Caco-2 (cell line): ENCODE measurements at regions of chr15 and their contacts with region 1.

Region 1: DNA sequence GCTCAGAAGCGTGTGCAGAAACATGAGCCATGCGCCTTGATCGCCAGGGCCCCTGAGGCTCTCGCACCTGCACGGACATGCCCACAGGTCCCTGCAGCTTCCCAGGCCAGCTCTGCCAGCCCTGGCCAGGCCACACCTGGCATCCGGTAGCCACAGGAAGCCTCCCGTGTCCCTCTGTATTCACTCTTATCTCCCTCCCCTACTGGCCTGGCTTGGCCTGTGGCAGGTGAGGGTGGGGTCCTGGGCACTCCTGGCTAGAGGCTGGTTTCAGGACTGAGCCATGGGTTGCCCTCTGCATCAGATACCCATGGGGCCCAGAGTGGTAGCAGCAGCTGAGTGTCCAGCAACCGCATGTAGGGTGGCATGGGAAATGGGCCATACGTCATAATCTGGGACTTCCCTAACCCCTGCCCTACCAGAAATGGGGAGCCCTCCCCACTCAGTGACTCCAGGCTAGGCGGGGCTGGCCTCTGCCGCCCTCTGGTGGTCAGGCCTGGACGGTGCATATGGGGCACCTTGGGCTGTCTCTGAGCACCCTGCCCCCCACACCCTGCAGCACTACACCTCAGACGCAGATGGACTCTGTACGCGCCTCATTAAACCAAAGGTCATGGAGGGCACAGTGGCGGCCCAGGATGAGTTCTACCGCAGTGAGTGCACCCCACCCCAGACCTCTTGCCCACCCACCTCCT is 12.6 kb upstream of the LMAN1L start:
- DNase-seq: peak; percentile 61 to 83
- H3K4me3 ChIP-seq: no peak overlapping the region
- H3K4me3 Mint-ChIP-seq: no peak overlapping the region
- H3K27ac Mint-ChIP-seq: no peak overlapping the region
- H3K4me1 ChIP-seq: no peaks in the 10 kb centered on the region
- H3K4me1 Mint-ChIP-seq: no peaks in the 10 kb centered on the region
- H3K27me3 ChIP-seq: no peaks in the 10 kb centered on the region
- H3K27me3 Mint-ChIP-seq: no peaks in the 10 kb centered on the region
- CTCF ChIP-seq: peak; percentile 95 to 98

Region 2: GRCh38 chr15:74781431-74782258 is 18.4 kb before region 1 on chr15 and contains the start of gene CSK:
- CTCF ChIA-PET with region 1: no interaction called
- POLR2A ChIA-PET with region 1: interaction called, 3 read pairs
- intact Hi-C with region 1: loop called (anchors 2 kb)
- DNase-seq: peak in 1 of 2 experiments; percentile 76
- H3K4me3 ChIP-seq: peak within 1 kb of the TSS; percentile 82
- H3K4me3 Mint-ChIP-seq: peak within 1 kb of the TSS; percentile 90
- H3K27ac Mint-ChIP-seq: peak within 1 kb of the TSS; percentile 55
- H3K4me1 ChIP-seq: peaks cover 32% of the 10 kb centered on the region
- H3K4me1 Mint-ChIP-seq: peaks cover 31% of the 10 kb centered on the region
- H3K27me3 ChIP-seq: no peaks in the 10 kb centered on the region
- H3K27me3 Mint-ChIP-seq: no peaks in the 10 kb centered on the region
- CTCF ChIP-seq: peak; percentile 41 to 73
- total RNA-seq, gene CSK: 62.7 and 62.8 TPM in 2 replicates